Posterior vena cava (tissue), 2 donors: ENCODE measurements at regions of chr14 and their contacts with region 1.

Region 1: GRCh38 chr14:34982417-34983147 is at the start of gene SRP54:
- DNase-seq: peak; percentile 99
- total RNA-seq, gene SRP54: 40.0 to 42.3 TPM

Region 2: DNA sequence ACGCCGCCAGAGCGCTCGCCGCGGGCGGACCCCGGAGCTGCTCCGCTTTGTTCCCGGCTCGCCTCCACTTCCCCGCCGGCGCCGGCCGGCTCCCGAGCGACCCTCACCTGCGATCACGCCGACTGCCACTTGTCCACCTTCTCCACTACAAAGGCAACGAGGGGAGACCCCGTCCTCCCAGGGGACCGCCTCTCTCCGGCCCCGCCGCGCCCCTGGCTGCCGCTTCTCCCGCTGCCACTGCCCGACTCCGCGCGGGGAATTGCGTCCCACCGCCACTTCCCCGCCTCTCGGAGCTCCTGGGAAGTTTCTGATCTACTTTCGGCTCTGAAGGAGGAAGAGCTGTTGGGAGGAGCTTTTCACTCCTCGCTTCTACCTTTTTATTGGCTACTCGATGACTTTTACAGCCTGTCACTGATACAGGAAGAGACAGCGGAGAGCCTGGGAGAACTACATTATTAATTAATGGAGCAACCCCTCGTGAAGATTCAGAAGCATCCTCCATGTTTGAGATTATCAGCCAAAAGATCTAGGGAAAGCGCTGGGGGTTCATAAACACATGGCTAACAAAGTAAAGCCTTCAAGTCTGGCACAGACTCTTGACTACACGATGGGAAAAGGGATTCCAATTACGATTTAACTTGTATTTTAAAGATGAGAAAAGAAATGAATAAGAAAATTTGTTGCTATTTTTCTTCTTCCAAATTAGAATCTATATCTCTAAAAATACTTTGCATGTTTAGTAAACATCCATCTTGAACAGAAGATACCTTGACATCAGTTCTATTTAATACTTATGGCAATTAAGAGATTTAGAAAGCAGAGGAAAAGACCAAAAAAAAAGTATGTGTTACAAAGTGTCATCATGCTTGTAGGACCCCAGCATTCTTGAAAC is 107.3 kb before region 1 on chr14 and contains the start of gene BAZ1A:
- intact Hi-C with region 1: loop called in 1 of 2 experiments (anchors 10 kb)
- DNase-seq: peak; percentile 86
- total RNA-seq, gene BAZ1A: 17.3 to 31.6 TPM

Region 3: GRCh38 chr14:35004839-35005238 is 22.3 kb after region 1 on chr14:
- intact Hi-C with region 1: loop called in 1 of 2 experiments (anchors 2 kb)
- DNase-seq: no peak